Right ventricle myocardium inferior (tissue), 1 donor: ENCODE measurements at regions of chr2 and their contacts with region 1.

Region 1: DNA sequence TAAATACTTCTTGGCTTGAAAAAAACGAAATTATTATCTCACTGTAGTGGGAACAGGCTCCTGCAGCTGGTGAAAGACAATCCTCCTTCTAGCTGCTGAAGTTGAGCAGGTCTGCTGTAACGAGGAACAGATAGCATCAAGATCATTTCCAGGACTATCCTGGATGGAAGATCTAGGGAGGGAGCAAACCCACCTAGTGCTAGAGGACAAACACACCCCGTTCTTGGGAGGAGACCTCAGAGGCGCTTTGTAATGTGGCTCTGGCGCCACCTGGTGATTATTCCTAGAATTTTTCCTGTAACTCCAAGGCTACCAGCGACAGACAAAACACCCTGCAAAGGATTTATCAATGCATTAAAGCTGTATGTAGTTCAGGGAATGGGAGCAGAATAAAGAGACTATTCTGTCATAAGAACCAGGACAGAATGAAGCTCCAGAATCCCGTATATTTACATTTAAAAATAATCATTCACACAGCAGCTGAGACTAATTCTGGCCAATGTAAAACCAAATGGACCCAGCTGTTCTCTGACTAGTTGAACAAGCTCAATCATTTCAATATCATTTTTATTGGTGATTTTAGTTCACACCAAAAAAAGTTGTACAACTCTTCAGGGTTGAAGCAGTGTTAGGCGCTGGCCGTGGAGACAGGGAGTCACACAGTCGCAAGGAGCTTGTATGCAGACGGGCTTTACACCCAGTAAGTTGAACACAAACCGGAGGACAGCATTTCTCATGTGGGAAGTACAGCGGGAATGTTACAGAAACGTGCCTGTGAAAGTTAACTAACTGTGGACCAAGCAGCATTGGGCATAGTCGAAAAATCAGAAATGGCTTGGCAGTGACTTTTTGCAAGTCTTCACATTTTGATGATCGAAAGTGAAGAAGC is 290.3 kb downstream of the TRIB2 start:
- DNase-seq: no peak
- ATAC-seq: peak; percentile 90

Region 2: DNA sequence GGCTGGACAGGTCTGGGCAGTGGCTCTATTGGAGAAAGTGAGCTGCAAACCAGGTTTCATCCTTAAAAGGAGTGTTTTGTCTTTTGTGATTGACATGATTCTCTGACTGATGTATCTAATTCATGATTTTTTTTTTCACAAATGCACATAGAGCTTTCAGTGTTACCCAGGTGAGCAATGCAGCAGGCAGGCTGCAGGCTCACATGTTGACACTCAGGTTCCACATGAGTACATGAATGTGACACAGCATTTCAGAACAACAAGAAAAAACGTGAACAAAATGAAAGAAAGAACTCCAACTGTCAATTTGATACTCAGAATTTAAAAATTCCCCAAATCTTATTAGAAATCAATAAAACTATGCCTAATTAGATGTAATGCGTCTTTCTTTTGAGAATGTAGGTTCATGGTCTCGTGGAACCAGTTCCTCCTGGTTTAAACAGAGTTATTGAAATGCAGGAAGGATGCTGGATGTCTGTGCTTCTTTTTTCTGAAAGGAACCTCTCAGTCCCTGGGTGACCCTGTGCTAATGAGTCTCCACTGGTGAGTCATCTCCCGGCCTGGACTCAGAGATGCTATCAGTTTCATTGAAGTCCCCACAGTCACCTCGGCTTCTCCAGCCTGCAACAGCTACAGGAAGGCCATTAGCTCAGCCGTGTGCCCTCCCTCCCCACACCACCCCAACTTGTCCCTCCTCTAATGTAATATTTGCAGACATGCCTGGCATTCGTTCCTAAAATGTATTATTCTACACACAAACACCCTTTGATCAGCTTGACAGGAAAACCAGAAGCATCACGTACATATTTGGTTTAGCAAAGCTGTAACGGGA is 830.2 kb before region 1 on chr2:
- intact Hi-C with region 1: loop called (anchors 10 kb)
- DNase-seq: no peak
- ATAC-seq: peak; percentile 73